ENCODE measurements at regions of chr1 and their contacts with region 1.

Region 1: DNA sequence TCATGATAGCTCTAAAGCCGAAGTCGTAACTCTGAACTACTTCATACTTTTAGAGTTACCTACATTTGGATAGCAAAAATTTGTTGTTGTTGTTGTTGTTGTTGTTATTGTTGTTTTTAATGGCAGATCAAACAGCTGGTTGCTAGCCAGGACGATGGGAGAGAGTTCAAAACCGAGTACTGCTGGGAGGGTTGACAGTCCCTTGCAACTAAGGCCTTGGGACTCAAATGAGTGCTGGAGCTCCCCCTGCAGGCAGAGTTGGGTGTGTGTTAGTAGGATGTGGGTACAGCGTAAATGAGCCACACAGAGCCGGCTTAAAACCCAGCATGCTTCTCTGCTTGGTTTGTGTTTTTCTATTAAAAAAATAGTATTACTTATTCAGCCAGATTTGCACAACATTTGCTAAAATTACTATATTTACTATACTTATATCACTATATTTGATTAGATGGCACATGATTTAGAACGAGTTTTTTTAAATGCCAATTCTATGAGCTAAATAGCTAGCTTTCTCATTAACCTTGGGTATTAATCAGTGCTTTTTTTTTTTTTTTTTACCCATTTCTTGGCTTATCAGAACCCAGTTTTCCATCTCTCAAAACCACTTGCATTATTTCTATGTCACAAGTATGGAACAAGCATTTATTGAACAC is 129.2 kb upstream of the SYT6 start:
- H3K4me3 Mint-ChIP-seq: no peak overlapping the region
- H3K27ac Mint-ChIP-seq: no peak overlapping the region
- H3K4me1 Mint-ChIP-seq: no peaks in the 10 kb centered on the region
- H3K27me3 Mint-ChIP-seq: peaks cover 2% of the 10 kb centered on the region

Region 2: DNA sequence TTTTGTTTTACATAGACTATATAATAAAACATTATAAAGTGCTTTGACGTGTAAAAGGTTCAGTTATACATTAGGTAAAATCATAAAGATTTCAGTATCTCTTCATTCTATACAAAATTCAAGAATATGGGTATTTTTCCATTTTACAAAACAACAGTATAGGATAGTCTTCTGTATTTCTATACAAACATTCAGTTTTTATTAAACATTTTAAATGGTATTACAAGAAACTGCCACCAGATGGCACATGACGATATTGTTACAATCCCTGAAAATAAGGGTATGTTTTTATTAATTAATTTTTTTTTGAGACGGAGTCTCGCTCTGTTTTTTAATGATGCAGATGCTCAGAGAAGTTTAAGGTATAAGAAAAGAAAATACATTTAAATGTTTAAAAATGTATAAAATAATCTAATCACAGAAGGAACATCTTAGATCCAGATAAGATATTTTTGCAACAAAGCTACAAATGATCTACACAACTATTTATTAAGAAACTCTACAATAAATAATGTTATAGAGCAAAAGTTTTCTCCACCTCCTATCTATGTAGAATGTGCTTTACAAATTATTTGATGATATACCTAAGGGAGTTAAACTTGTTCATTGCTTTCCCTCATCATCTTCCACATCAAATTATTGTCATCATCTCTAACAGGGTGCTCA is 447.1 kb before region 1 on chr1:
- intact Hi-C with region 1: loop called (anchors 5 kb)
- H3K4me3 Mint-ChIP-seq: no peak overlapping the region
- H3K27ac Mint-ChIP-seq: no peak overlapping the region
- H3K4me1 Mint-ChIP-seq: no peaks in the 10 kb centered on the region
- H3K27me3 Mint-ChIP-seq: no peaks in the 10 kb centered on the region

Region 3: GRCh38 chr1:114108751-114109255 is 174.1 kb before region 1 on chr1:
- intact Hi-C with region 1: loop called (anchors 10 kb)
- H3K4me3 Mint-ChIP-seq: no peak overlapping the region
- H3K27ac Mint-ChIP-seq: peak overlapping the region; percentile 90
- H3K4me1 Mint-ChIP-seq: peaks cover 91% of the 10 kb centered on the region
- H3K27me3 Mint-ChIP-seq: peaks cover 1% of the 10 kb centered on the region

Measured in dendritic cell treated with granulocyte-macrophage colony-stimulating factor and Interleukin-4, amounts not matched to agents 40 ng/mL and 50 ng/mL, for 4 days (primary cell).